Naive thymus-derived CD4-positive, alpha-beta T cell (primary cell): ENCODE measurements at regions of chrX and their contacts with region 1.

Region 1: GRCh38 chrX:120468825-120469525 is at the start of gene LAMP2:
- DNase-seq: peak; percentile 58 to 78 (median 72)
- ATAC-seq: peak; percentile 99
- H3K4me3 ChIP-seq: peak within 1 kb of the TSS; percentile 79
- H3K4me3 Mint-ChIP-seq: peak within 1 kb of the TSS; percentile 89 to 99 (median 94)
- H3K27ac ChIP-seq: peak within 1 kb of the TSS; percentile 80
- H3K27ac Mint-ChIP-seq: peak within 1 kb of the TSS; percentile 76 to 94 (median 92)
- H3K4me1 ChIP-seq: peaks cover 0 to 7% of the 10 kb centered on the region in 2 donors
- H3K4me1 Mint-ChIP-seq: peaks cover 5 to 40% (median 29%) of the 10 kb centered on the region in 7 donors
- H3K27me3 ChIP-seq: no peaks in the 10 kb centered on the region
- H3K27me3 Mint-ChIP-seq: no peaks in the 10 kb centered on the region
- total RNA-seq, gene LAMP2: 22.5 to 60.3 (median 44.9) TPM

Region 2: DNA sequence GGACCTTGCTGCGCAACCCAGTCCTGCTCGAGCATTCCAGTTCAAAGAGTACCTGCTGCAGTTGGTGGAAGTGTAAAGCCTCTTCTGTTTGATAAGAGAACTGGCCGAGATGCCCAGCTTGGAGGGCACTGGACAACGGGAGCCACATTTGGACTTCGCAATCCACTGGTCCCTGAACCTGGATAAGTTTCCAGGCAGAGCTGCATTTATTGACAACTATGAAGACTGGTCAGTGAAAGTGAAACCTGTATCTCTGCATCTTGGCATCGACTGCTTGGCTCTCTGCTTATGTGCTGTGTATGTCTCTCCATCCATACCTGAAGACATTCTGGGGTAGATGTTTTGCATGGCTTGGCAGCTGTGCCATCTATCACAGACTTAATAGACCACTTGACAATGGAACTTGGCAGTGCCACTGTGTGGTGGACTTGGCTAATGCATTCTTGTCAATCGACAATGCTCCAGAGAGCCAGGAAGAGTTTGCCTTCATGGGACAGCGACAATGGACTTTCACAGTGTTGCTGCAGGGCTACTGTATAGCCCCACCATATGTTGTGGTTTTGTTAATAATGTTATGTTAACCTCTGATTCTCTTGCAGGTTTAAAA is 261.9 kb before region 1 on chrX:
- CTCF ChIA-PET with region 1: no interaction called
- POLR2A ChIA-PET with region 1: no interaction called
- intact Hi-C with region 1: no loop called
- DNase-seq: no peak
- ATAC-seq: no peak
- H3K4me3 ChIP-seq: no peak overlapping the region
- H3K4me3 Mint-ChIP-seq: no peak overlapping the region
- H3K27ac ChIP-seq: no peak overlapping the region
- H3K27ac Mint-ChIP-seq: no peak overlapping the region
- H3K4me1 ChIP-seq: no peaks in the 10 kb centered on the region
- H3K4me1 Mint-ChIP-seq: no peaks in the 10 kb centered on the region
- H3K27me3 ChIP-seq: no peaks in the 10 kb centered on the region
- H3K27me3 Mint-ChIP-seq: no peaks in the 10 kb centered on the region

Region 3: DNA sequence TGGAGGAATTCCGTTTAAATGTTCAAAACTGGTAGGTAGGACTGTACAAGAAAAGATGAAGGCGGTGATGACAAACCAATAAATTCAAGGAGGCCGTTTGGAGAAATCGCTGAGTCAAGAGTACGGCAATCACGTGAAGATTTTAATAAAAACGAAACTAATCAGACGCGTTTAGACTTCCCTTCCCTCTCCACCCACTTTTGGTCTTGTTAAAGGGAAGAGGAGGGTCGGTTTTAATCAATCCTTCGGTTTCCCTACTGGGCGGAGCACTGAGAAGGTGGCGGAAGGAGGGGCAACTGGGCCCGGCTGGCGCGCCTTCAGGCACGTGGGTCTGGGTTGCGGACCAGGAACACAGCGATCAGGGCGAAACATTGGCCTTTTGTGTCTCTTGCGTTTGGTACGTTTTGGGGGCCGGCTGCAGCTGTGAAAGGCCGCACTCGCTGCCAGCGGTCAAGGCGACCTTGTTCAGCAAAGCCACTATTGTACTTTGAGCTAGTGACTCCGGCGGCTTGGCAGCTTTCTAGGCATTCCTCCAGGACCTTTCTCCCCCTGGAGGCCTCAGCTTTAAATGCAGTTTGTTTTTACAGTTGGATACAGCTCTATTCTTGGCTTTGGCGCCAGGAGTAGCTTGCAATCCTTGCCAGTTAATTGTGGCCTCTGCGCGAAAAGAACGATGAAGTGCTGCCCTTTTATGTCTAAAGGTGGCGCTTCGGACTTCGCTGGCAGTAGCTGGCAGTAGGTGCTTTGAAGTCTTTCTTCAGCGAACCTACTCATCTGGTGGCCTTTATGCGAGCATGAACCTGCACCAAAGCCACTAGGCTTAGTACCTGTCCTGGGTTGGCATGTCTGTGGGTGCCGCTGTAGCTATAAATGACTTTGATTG is 16.9 kb after region 1 on chrX:
- CTCF ChIA-PET with region 1: interaction called, 4 read pairs
- POLR2A ChIA-PET with region 1: interaction called, 7 read pairs
- intact Hi-C with region 1: loop called (anchors 1 kb)
- DNase-seq: peak; percentile 21 to 52 (median 43)
- ATAC-seq: peak; percentile 83
- H3K4me3 ChIP-seq: peak overlapping the region; percentile 89
- H3K4me3 Mint-ChIP-seq: peak overlapping the region; percentile 81 to 94 (median 89)
- H3K27ac ChIP-seq: peak overlapping the region; percentile 69
- H3K27ac Mint-ChIP-seq: peak overlapping the region; percentile 81 to 96 (median 91)
- H3K4me1 ChIP-seq: peaks cover 9 to 18% of the 10 kb centered on the region in 2 donors
- H3K4me1 Mint-ChIP-seq: peaks cover 5 to 28% (median 19%) of the 10 kb centered on the region in 7 donors
- H3K27me3 ChIP-seq: no peaks in the 10 kb centered on the region
- H3K27me3 Mint-ChIP-seq: no peaks in the 10 kb centered on the region

Region 4: GRCh38 chrX:122220644-122221373 is 1751.8 kb after region 1 on chrX:
- CTCF ChIA-PET with region 1: no interaction called
- POLR2A ChIA-PET with region 1: no interaction called
- intact Hi-C with region 1: no loop called
- DNase-seq: no peak
- ATAC-seq: no peak
- H3K4me3 ChIP-seq: no peak overlapping the region
- H3K4me3 Mint-ChIP-seq: no peak overlapping the region
- H3K27ac ChIP-seq: no peak overlapping the region
- H3K27ac Mint-ChIP-seq: no peak overlapping the region
- H3K4me1 ChIP-seq: no peaks in the 10 kb centered on the region
- H3K4me1 Mint-ChIP-seq: no peaks in the 10 kb centered on the region
- H3K27me3 ChIP-seq: no peaks in the 10 kb centered on the region
- H3K27me3 Mint-ChIP-seq: peaks cover 0 to 28% (median 0%) of the 10 kb centered on the region in 5 donors